ENCODE measurements at regions of chr5 and their contacts with region 1.

Region 1: DNA sequence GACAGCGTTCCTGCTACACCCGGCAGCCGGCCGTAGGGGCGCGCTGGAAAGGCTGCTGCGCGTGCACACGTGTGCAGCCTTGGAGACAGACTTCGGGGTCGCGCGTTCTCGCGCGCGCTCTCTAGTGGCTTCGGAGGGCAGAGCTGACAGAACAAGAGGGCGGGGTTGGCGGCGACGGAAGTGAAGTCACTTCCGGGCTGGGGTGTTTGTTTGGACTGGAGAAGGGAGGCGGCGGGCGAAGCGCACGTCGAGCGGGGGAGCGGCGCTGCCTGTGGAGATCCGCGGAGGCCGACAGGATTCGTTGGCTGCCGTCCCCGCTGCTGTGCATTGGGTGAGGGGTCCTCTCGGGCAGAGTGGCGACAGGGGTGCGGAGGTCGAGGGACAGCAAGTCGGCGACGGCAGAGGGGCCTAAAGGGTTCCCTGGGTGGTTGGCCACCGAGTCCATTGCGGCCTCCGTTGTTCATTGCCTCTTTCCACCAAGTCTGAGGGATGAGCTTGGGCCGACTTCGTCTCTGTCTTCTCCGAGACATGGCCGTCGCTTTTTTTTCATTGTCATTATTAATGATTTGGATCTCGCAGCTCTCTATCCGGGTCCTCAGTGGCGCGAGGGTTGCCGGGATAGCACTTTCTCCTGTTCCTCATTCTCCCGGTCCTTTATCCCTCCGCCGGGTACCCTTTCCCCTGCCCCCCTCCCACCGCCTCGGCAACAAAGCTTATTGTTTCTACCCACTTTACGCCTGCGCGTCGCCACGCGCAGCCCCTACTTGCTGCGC is at the start of gene PAIP2:
- DNase-seq: peak; percentile 98
- H3K4me3 Mint-ChIP-seq: peak within 1 kb of the TSS; percentile 83
- H3K27ac Mint-ChIP-seq: peak within 1 kb of the TSS; percentile 90
- H3K4me1 Mint-ChIP-seq: peaks cover 14% of the 10 kb centered on the region
- H3K27me3 Mint-ChIP-seq: no peaks in the 10 kb centered on the region
- CTCF ChIP-seq: peak; percentile 78
- total RNA-seq, gene PAIP2: 73.0 and 81.2 TPM in 2 replicates

Region 2: GRCh38 chr5:139177809-139178588 is 163.8 kb before region 1 on chr5:
- CTCF ChIA-PET with region 1: interaction called, 11 read pairs
- intact Hi-C with region 1: no loop called
- DNase-seq: no peak
- H3K4me3 Mint-ChIP-seq: no peak overlapping the region
- H3K27ac Mint-ChIP-seq: peak overlapping the region; percentile 8
- H3K4me1 Mint-ChIP-seq: peaks cover 38% of the 10 kb centered on the region
- H3K27me3 Mint-ChIP-seq: no peaks in the 10 kb centered on the region
- CTCF ChIP-seq: no peak

Region 3: GRCh38 chr5:139222335-139222734 is 119.5 kb before region 1 on chr5:
- CTCF ChIA-PET with region 1: no interaction called
- intact Hi-C with region 1: no loop called
- DNase-seq: peak; percentile 16
- H3K4me3 Mint-ChIP-seq: no peak overlapping the region
- H3K27ac Mint-ChIP-seq: no peak overlapping the region
- H3K4me1 Mint-ChIP-seq: peaks cover 13% of the 10 kb centered on the region
- H3K27me3 Mint-ChIP-seq: no peaks in the 10 kb centered on the region
- CTCF ChIP-seq: no peak

Region 4: GRCh38 chr5:139293504-139294373 is 48.1 kb before region 1 on chr5 and contains the start of gene MATR3:
- CTCF ChIA-PET with region 1: interaction called, 12 read pairs
- intact Hi-C with region 1: no loop called
- DNase-seq: peak; percentile 98
- H3K4me3 Mint-ChIP-seq: peak within 1 kb of the TSS; percentile 98
- H3K27ac Mint-ChIP-seq: peak within 1 kb of the TSS; percentile 98
- H3K4me1 Mint-ChIP-seq: peaks cover 35% of the 10 kb centered on the region
- H3K27me3 Mint-ChIP-seq: no peaks in the 10 kb centered on the region
- CTCF ChIP-seq: no peak
- total RNA-seq, gene MATR3: 228 and 230 TPM in 2 replicates

Region 5: GRCh38 chr5:139392678-139393496 is 51.1 kb after region 1 on chr5:
- CTCF ChIA-PET with region 1: interaction called, 3 read pairs
- intact Hi-C with region 1: loop called (anchors 5 kb)
- DNase-seq: peak; percentile 93
- H3K4me3 Mint-ChIP-seq: peak overlapping the region; percentile 81
- H3K27ac Mint-ChIP-seq: peak overlapping the region; percentile 5
- H3K4me1 Mint-ChIP-seq: peaks cover 20% of the 10 kb centered on the region
- H3K27me3 Mint-ChIP-seq: no peaks in the 10 kb centered on the region
- CTCF ChIP-seq: peak; percentile 94

Measured in Calu3 (cell line).